HepG2 (cell line): ENCODE measurements at regions of chr5 and their contacts with region 1.

Region 1: GRCh38 chr5:16456103-16456832 is 9.3 kb downstream of the ZNF622 start:
- DNase-seq: peak; percentile 48
- ATAC-seq: peak; percentile 83
- H3K4me3 ChIP-seq: no peak overlapping the region
- H3K27ac ChIP-seq: no peak overlapping the region
- H3K4me1 ChIP-seq: peaks cover 2% of the 10 kb centered on the region
- H3K27me3 ChIP-seq: no peaks in the 10 kb centered on the region
- CTCF ChIP-seq: peak; percentile 72
- EP300 ChIP-seq: no peak
- POLR2A ChIP-seq: no peak
- RAD21 ChIP-seq: 0 out of 2 replicates have a peak, but pooled peaks have one; percentile 18

Region 2: DNA sequence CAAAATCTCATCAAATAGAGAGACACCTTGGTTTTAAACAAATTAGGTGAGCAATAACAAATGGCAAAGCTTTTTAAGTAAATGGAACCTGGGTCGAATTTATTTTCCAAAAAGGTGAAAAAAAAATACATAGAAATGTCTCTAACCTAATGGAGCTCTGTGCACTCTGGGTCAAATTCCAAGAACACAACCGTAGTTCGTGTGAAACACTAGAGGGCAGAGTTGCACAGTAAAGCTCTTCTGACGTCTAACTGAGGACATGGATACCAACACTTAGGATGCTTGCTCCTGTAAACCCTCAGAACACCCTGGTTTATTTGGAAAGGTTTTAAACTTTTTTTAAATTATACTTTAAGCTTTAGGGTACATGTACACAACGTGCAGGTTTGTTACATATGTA is 295.6 kb before region 1 on chr5:
- CTCF ChIA-PET with region 1: interaction called, 13 read pairs
- POLR2A ChIA-PET with region 1: no interaction called
- in situ Hi-C with region 1: loop called (anchors 5 kb)
- intact Hi-C with region 1: loop called (anchors 1 kb)
- DNase-seq: peak; percentile 60
- ATAC-seq: peak; percentile 97
- H3K4me3 ChIP-seq: no peak overlapping the region
- H3K27ac ChIP-seq: no peak overlapping the region
- H3K4me1 ChIP-seq: no peaks in the 10 kb centered on the region
- H3K27me3 ChIP-seq: no peaks in the 10 kb centered on the region
- CTCF ChIP-seq: peak; percentile 79
- EP300 ChIP-seq: no peak
- POLR2A ChIP-seq: no peak
- RAD21 ChIP-seq: 0 out of 2 replicates have a peak, but pooled peaks have one; percentile 31

Region 3: GRCh38 chr5:16492391-16493175 is 36.3 kb after region 1 on chr5:
- CTCF ChIA-PET with region 1: no interaction called
- POLR2A ChIA-PET with region 1: no interaction called
- in situ Hi-C with region 1: no loop called
- intact Hi-C with region 1: no loop called
- DNase-seq: no peak
- ATAC-seq: no peak
- H3K4me3 ChIP-seq: no peak overlapping the region
- H3K27ac ChIP-seq: no peak overlapping the region
- H3K4me1 ChIP-seq: no peaks in the 10 kb centered on the region
- H3K27me3 ChIP-seq: no peaks in the 10 kb centered on the region; a peak in 1 of 5 replicates
- CTCF ChIP-seq: no peak
- EP300 ChIP-seq: no peak
- POLR2A ChIP-seq: no peak
- RAD21 ChIP-seq: no peak